Mammary epithelial cell (primary cell): ENCODE measurements at regions of chr19 and their contacts with region 1.

Region 1: GRCh38 chr19:6963937-6964336 is 57.3 kb downstream of the MBD3L2B start:
- DNase-seq: no peak
- H3K4me3 ChIP-seq: no peak overlapping the region
- H3K27ac ChIP-seq: no peak overlapping the region
- H3K4me1 ChIP-seq: no peaks in the 10 kb centered on the region
- H3K27me3 ChIP-seq: no peaks in the 10 kb centered on the region
- CTCF ChIP-seq: no peak

Region 2: DNA sequence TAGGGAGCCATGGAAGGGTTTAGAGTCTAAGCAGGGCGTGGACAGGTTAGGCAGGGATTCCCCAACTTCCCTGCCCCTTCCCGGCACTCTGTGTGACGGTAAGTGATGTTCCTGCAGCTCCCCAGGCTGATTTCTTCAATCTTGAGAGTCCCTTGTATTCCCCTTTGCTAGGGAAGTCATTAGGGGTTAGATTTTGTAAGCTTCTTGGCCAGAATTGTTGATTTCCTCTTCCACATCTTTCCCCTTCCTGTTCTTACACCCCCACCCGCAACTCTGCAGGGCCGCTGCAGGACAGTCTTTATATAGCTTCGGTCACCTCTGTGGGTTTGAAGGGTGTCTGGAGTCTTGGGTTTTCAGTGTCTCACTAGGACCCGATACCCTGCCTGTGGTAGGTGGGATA is 87.2 kb before region 1 on chr19:
- CTCF ChIA-PET with region 1: no interaction called
- dilution Hi-C with region 1: loop called (anchors 5 kb)
- in situ Hi-C with region 1: no loop called
- intact Hi-C with region 1: no loop called
- DNase-seq: no peak
- H3K4me3 ChIP-seq: no peak overlapping the region
- H3K27ac ChIP-seq: no peak overlapping the region
- H3K4me1 ChIP-seq: no peaks in the 10 kb centered on the region
- H3K27me3 ChIP-seq: no peaks in the 10 kb centered on the region
- CTCF ChIP-seq: no peak

Region 3: GRCh38 chr19:6925801-6926751 is 37.9 kb before region 1 on chr19:
- CTCF ChIA-PET with region 1: no interaction called
- dilution Hi-C with region 1: loop called (anchors 5 kb)
- in situ Hi-C with region 1: no loop called
- intact Hi-C with region 1: no loop called
- DNase-seq: peak; percentile 6
- H3K4me3 ChIP-seq: no peak overlapping the region
- H3K27ac ChIP-seq: no peak overlapping the region
- H3K4me1 ChIP-seq: no peaks in the 10 kb centered on the region
- H3K27me3 ChIP-seq: no peaks in the 10 kb centered on the region
- CTCF ChIP-seq: no peak